K562 (cell line): ENCODE measurements at regions of chr3 and their contacts with region 1.

Region 1: DNA sequence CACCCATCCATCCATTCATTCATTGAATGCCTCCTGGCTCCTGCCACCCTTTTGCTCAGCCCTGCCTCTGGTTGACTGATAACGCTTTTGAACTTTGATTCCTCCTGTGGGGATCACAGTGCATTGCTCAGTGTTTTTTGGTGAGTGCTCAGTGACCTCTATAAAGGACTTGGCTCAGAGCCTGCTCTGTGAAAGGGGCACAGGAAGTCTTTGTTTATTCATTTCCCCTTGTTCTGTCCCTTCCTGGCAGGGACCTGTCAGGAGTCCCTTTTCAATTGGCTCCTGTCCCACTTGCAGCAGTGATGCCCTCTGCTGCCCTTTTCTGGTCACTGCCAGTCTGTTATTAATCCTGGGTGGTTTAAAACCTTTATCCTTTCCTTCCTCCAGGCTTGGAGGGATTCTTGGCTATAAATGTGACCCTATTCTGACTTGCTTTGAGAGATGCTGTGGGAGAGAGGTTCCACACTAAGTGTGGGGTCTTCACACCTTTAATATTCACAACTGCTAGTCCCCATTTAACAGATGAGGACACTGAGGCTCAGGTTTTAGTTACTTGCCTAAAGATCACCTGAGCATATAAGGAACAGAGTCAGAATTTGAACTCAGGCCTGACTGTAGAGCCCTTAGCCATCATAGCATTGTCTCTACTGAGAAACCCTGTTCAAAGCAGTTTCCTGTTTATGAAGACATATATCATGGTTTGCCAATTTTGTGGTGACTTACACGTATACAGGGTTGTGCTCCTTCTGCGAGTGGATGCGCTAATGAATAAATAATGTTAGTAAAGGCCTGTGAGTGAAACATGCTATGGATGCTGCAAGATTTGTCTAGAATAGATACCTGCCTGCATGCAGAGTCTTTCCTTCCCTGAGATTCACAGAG is 23.2 kb upstream of the TATDN2 start:
- DNase-seq: peak; percentile 66 to 79 (median 75)
- ATAC-seq: peak; percentile 89
- H3K4me3 ChIP-seq: no peak overlapping the region
- H3K27ac ChIP-seq: no peak overlapping the region
- H3K4me1 ChIP-seq: peaks cover 0 to 3% of the 10 kb centered on the region in 2 experiments; a peak in 2 of 5 replicates
- H3K27me3 ChIP-seq: no peaks in the 10 kb centered on the region
- CTCF ChIP-seq: peak; percentile 77 to 93 (median 83)
- EP300 ChIP-seq: no peak
- POLR2A ChIP-seq: no peak
- RAD21 ChIP-seq: peak; percentile 94 to 96

Region 2: GRCh38 chr3:9820543-9820942 is 404.5 kb before region 1 on chr3:
- CTCF ChIA-PET with region 1: no interaction called
- POLR2A ChIA-PET with region 1: no interaction called
- in situ Hi-C with region 1: no loop called
- intact Hi-C with region 1: no loop called
- DNase-seq: no peak
- ATAC-seq: peak; percentile 4; the same call in 2 of the 3 replicates
- H3K4me3 ChIP-seq: no peak overlapping the region
- H3K27ac ChIP-seq: no peak overlapping the region; the same call in 2 of the 3 replicates
- H3K4me1 ChIP-seq: peaks cover 0 to 1% of the 10 kb centered on the region in 2 experiments; a peak in 2 of 5 replicates
- H3K27me3 ChIP-seq: no peaks in the 10 kb centered on the region
- CTCF ChIP-seq: no peak
- EP300 ChIP-seq: no peak
- POLR2A ChIP-seq: no peak
- RAD21 ChIP-seq: no peak

Region 3: DNA sequence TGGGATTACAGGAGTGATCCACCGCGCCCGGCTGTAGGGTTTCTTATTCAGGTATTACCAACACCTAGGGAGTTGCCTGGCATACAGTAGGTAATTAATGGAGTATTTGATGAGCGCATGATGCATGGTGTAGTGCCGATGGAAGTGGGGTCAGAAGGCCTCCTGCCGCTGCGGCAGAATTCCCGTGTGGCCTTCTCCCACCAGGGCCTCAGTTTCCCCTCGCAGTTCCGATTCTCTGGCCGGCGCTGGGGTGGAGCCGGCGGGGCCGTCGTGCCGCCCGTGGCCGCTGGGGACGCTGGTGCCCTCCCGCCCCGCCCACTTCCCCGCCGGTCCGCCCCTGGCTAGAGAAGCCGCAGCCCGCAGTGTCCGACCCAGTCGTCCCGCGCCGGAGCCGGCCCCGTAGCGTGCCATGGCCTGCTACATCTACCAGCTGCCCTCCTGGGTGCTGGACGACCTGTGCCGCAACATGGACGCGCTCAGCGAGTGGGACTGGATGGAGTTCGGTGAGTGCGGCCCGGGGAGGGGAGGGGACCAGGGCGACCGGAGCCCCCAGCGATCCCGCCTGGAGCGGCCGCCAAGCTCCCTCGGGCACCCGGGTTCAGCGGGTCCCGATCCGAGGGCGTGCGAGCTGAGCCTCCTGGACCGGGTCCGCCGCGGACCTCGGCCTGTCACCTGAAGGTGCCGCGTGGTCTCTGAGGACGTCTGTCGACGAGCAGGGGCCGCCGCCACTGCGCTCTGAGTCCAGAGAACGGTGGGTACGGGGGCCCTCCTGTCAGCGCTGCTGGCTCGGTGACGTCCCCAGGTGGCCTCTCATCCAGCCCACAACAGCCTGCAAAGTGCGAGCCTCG is 60.3 kb before region 1 on chr3 and contains the start of gene IRAK2:
- CTCF ChIA-PET with region 1: interaction called, 4 read pairs
- POLR2A ChIA-PET with region 1: no interaction called
- in situ Hi-C with region 1: no loop called
- intact Hi-C with region 1: loop called (anchors 2 kb)
- DNase-seq: peak; percentile 87 to 96 (median 94)
- ATAC-seq: peak; percentile 96
- H3K4me3 ChIP-seq: peak within 1 kb of the TSS; percentile 69
- H3K27ac ChIP-seq: peak within 1 kb of the TSS; percentile 41; the same call in 1 of the 3 replicates
- H3K4me1 ChIP-seq: peaks cover 0 to 17% of the 10 kb centered on the region in 2 experiments; a peak in 3 of 5 replicates
- H3K27me3 ChIP-seq: no peaks in the 10 kb centered on the region
- CTCF ChIP-seq: peak; percentile 72 to 83 (median 82)
- EP300 ChIP-seq: no peak
- POLR2A ChIP-seq: peak; percentile 64
- RAD21 ChIP-seq: peak; percentile 23 to 32
- polyA plus RNA-seq, gene IRAK2: 0.42 to 1.0 TPM